ENCODE measurements at regions of chr12 and their contacts with region 1.

Region 1: GRCh38 chr12:30850684-30851083 is 75.9 kb upstream of the TSPAN11 start:
- DNase-seq: peak in 1 of 10 donors; percentile 60

Region 2: GRCh38 chr12:30985814-30986452 is 135.2 kb after region 1 on chr12:
- intact Hi-C with region 1: loop called (anchors 2 kb)
- DNase-seq: peak; percentile 58 to 97 (median 78)

Region 3: GRCh38 chr12:31238764-31239387 is 388.2 kb after region 1 on chr12:
- intact Hi-C with region 1: loop called (anchors 5 kb)
- DNase-seq: peak in 7 of 10 donors; percentile 45 to 91 (median 67)

Region 4: GRCh38 chr12:31272607-31273225 is 422.0 kb after region 1 on chr12:
- intact Hi-C with region 1: loop called (anchors 2 kb)
- DNase-seq: no peak

Region 5: GRCh38 chr12:31325877-31326631 is 475.4 kb after region 1 on chr12 and contains the start of gene SINHCAF:
- intact Hi-C with region 1: no loop called
- DNase-seq: peak; percentile 91 to 99 (median 97)

Measured in posterior cingulate gyrus (tissue), 11 donors.